Endothelial cell of umbilical vein (primary cell): ENCODE measurements at regions of chr20 and their contacts with region 1.

Region 1: DNA sequence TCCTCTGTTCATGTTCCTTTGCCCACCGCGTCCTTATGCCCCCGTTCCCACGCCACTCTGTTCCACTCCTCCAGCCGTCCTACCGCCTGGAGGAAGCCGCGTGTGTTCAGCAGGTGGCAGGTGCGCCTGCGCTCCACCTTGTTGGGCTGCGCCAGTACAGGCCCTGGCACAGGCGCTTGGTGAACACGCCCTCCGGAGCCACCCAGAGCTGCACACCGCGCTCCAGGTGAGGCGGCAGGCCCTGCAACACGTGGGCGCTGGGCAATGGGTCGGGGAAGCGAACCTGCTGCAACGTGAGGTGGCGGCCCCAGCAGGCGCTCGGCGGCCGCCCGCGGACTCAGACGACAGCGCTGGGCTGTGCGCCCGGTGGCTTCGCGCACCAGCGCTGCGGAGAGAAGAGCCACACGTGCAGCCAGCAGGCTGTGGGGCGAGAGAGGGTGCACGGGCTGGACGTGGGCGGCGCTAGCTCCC is 4.1 kb upstream of the FOXS1 start:
- DNase-seq: no peak
- H3K4me3 ChIP-seq: no peak overlapping the region
- H3K27ac ChIP-seq: no peak overlapping the region
- H3K4me1 ChIP-seq: no peaks in the 10 kb centered on the region
- H3K27me3 ChIP-seq: peaks cover 18 to 19% of the 10 kb centered on the region in 2 experiments
- CTCF ChIP-seq: no peak
- POLR2A ChIP-seq: no peak

Region 2: GRCh38 chr20:31815408-31816188 is 33.9 kb before region 1 on chr20:
- CTCF ChIA-PET with region 1: interaction called, 619 read pairs
- POLR2A ChIA-PET with region 1: no interaction called
- dilution Hi-C with region 1: no loop called
- intact Hi-C with region 1: no loop called
- DNase-seq: no peak
- H3K4me3 ChIP-seq: no peak overlapping the region
- H3K27ac ChIP-seq: no peak overlapping the region
- H3K4me1 ChIP-seq: peaks cover 8% of the 10 kb centered on the region
- H3K27me3 ChIP-seq: no peaks in the 10 kb centered on the region
- CTCF ChIP-seq: no peak
- POLR2A ChIP-seq: no peak

Region 3: GRCh38 chr20:31870726-31871617 is 21.5 kb after region 1 on chr20:
- CTCF ChIA-PET with region 1: interaction called, 10 read pairs
- POLR2A ChIA-PET with region 1: no interaction called
- dilution Hi-C with region 1: no loop called
- intact Hi-C with region 1: no loop called
- DNase-seq: no peak
- H3K4me3 ChIP-seq: peak overlapping the region in 1 of 3 experiments; percentile 41
- H3K27ac ChIP-seq: no peak overlapping the region
- H3K4me1 ChIP-seq: no peaks in the 10 kb centered on the region
- H3K27me3 ChIP-seq: peaks cover 30 to 32% of the 10 kb centered on the region in 2 experiments
- CTCF ChIP-seq: no peak
- POLR2A ChIP-seq: no peak

Region 4: DNA sequence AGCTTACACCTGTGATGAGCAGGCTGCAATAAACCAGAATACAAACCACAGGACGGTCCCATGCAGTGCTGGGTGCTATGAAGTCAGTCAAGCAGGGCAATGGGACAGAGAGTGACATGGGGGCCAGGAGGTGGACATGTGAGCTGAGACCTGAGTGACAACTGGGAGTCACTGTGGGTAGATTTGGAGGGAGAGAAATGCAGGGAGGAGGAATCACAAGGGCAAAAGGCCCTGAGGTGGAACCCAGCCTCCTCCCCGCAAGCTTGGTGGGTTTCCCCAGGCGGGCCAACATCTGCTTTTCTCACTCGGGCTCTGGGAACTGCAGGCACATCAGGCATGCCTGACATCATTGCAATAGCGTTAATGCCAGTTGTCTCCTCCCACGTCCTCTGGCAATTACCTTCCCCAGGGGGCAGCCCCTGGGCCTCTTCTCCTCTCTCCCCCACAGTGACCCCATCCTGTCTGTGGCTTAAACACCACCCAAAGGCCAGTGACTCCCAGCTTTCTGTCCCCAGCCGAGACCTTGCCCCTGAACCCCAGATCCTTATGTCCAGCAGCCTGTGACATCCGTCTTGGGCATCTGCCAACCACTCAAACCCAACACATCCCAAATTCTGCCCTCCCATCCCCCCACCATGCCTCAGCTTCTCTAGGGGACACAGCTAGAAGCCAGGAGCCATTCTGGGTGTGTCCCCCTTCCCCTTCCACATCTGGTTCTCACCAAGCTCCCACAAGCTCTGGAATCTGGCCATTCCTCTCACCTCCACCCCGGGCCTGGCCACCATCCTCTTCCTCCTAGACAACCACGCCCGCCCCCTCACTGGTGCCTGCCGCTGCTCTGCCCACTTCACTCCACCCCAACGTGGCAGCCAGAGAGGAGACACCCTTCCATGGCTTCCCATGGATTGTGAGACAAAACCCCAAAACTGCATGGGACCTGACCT is 74.2 kb after region 1 on chr20:
- CTCF ChIA-PET with region 1: no interaction called
- POLR2A ChIA-PET with region 1: no interaction called
- dilution Hi-C with region 1: no loop called
- intact Hi-C with region 1: no loop called
- DNase-seq: no peak
- H3K4me3 ChIP-seq: no peak overlapping the region
- H3K27ac ChIP-seq: no peak overlapping the region
- H3K4me1 ChIP-seq: no peaks in the 10 kb centered on the region
- H3K27me3 ChIP-seq: peaks cover 2 to 5% of the 10 kb centered on the region in 2 experiments
- CTCF ChIP-seq: no peak
- POLR2A ChIP-seq: no peak